ENCODE measurements at regions of chr12 and their contacts with region 1.

Region 1: GRCh38 chr12:119659289-119659897 is 8.5 kb upstream of the PRKAB1 start:
- DNase-seq: peak; percentile 58 to 65 (median 60)
- ATAC-seq: peak; percentile 69
- H3K4me3 ChIP-seq: no peak overlapping the region
- H3K27ac ChIP-seq: no peak overlapping the region
- H3K4me1 ChIP-seq: peaks cover 2 to 28% of the 10 kb centered on the region in 2 experiments; a peak in 4 of 5 replicates
- H3K27me3 ChIP-seq: no peaks in the 10 kb centered on the region
- CTCF ChIP-seq: peak; percentile 54 to 83 (median 80); a peak in 5 of 6 replicates
- EP300 ChIP-seq: no peak
- POLR2A ChIP-seq: no peak
- RAD21 ChIP-seq: peak; percentile 37 to 54

Region 2: GRCh38 chr12:119556854-119557253 is 102.5 kb before region 1 on chr12:
- CTCF ChIA-PET with region 1: no interaction called
- POLR2A ChIA-PET with region 1: no interaction called
- in situ Hi-C with region 1: no loop called
- intact Hi-C with region 1: no loop called
- DNase-seq: no peak
- ATAC-seq: no peak
- H3K4me3 ChIP-seq: no peak overlapping the region
- H3K27ac ChIP-seq: no peak overlapping the region
- H3K4me1 ChIP-seq: peaks cover 0 to 4% of the 10 kb centered on the region in 2 experiments; a peak in 2 of 5 replicates
- H3K27me3 ChIP-seq: no peaks in the 10 kb centered on the region
- CTCF ChIP-seq: no peak
- EP300 ChIP-seq: no peak
- POLR2A ChIP-seq: no peak
- RAD21 ChIP-seq: no peak

Region 3: GRCh38 chr12:119780786-119781434 is 121.5 kb after region 1 on chr12:
- CTCF ChIA-PET with region 1: interaction called, 12 read pairs
- POLR2A ChIA-PET with region 1: interaction called, 3 read pairs
- in situ Hi-C with region 1: no loop called
- intact Hi-C with region 1: loop called (anchors 1 kb)
- DNase-seq: peak; percentile 44 to 62 (median 51)
- ATAC-seq: peak; percentile 80
- H3K4me3 ChIP-seq: no peak overlapping the region
- H3K27ac ChIP-seq: no peak overlapping the region
- H3K4me1 ChIP-seq: no peaks in the 10 kb centered on the region
- H3K27me3 ChIP-seq: no peaks in the 10 kb centered on the region
- CTCF ChIP-seq: peak; percentile 65 to 79 (median 78); a peak in 5 of 6 replicates
- EP300 ChIP-seq: no peak
- POLR2A ChIP-seq: no peak
- RAD21 ChIP-seq: peak; percentile 45 to 54

Region 4: GRCh38 chr12:119936705-119937311 is 277.4 kb after region 1 on chr12:
- CTCF ChIA-PET with region 1: interaction called, 6 read pairs
- POLR2A ChIA-PET with region 1: no interaction called
- in situ Hi-C with region 1: no loop called
- intact Hi-C with region 1: loop called (anchors 2 kb)
- DNase-seq: no peak
- ATAC-seq: no peak
- H3K4me3 ChIP-seq: no peak overlapping the region
- H3K27ac ChIP-seq: no peak overlapping the region
- H3K4me1 ChIP-seq: no peaks in the 10 kb centered on the region; a peak in 1 of 5 replicates
- H3K27me3 ChIP-seq: peaks cover 4 to 5% of the 10 kb centered on the region in 2 experiments; a peak in 2 of 5 replicates
- CTCF ChIP-seq: no peak
- EP300 ChIP-seq: no peak
- POLR2A ChIP-seq: no peak
- RAD21 ChIP-seq: no peak

Measured in K562 (cell line).